Posterior vena cava (tissue), 2 donors: ENCODE measurements at regions of chr7 and their contacts with region 1.

Region 1: DNA sequence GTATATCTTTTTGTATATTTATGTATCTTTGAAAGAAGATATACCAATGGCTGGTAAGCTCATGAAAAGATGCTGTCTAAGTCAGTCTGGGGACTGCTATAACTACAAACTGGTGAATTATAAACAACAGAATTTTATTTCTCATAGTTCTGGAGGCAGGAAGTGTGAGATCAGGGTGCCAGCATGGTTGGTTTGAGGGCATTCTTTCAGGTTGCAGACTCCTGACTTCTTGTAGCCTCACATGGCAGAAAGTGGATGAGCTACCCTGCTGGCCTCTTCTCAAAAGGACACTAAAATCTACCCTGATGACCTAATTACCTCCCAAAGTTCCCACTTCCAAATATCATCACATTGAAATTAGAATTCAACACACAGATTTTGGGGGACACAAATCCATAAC is 289.0 kb downstream of the TFEC start:
- DNase-seq: no peak

Region 2: DNA sequence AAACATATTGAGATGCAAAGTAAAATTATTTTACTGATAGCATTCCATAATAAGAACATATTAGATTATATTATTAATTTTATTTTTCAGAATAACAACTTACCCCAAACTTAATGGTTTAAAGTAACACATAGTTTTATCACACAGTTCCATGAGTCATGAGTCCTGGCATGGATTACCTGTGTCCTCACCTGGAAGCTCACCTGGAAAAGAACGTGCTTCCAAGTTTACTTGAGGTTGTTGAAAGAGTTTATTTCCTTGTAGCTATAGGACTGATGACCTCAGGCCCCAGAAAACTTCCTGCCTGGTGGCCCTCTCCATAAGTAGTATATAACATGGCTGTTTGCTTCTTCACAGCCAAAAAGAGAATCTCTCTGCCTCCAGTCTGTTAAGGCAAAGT is 34.4 kb after region 1 on chr7:
- intact Hi-C with region 1: loop called in 1 of 2 experiments (anchors 2 kb)
- DNase-seq: no peak

Region 3: GRCh38 chr7:116621649-116622048 is 880.1 kb after region 1 on chr7:
- intact Hi-C with region 1: loop called in 1 of 2 experiments (anchors 5 kb)
- DNase-seq: no peak